Ascending aorta (tissue), 2 donors: ENCODE measurements at regions of chrX and their contacts with region 1.

Region 1: GRCh38 chrX:46376246-46376885 is 168.9 kb downstream of the ZNF674 start:
- DNase-seq: no peak
- H3K4me3 ChIP-seq: no peak overlapping the region
- H3K27ac ChIP-seq: peak overlapping the region in 1 of 2 donors; percentile 2
- H3K4me1 ChIP-seq: no peaks in the 10 kb centered on the region
- H3K27me3 ChIP-seq: no peaks in the 10 kb centered on the region
- CTCF ChIP-seq: peak; percentile 18 to 48 (median 19)

Region 2: GRCh38 chrX:45596188-45596808 is 780.1 kb before region 1 on chrX:
- intact Hi-C with region 1: loop called (anchors 10 kb)
- DNase-seq: no peak
- H3K4me3 ChIP-seq: no peak overlapping the region
- H3K27ac ChIP-seq: no peak overlapping the region
- H3K4me1 ChIP-seq: no peaks in the 10 kb centered on the region
- H3K27me3 ChIP-seq: no peaks in the 10 kb centered on the region
- CTCF ChIP-seq: peak in 1 of 3 experiments; percentile 33

Region 3: DNA sequence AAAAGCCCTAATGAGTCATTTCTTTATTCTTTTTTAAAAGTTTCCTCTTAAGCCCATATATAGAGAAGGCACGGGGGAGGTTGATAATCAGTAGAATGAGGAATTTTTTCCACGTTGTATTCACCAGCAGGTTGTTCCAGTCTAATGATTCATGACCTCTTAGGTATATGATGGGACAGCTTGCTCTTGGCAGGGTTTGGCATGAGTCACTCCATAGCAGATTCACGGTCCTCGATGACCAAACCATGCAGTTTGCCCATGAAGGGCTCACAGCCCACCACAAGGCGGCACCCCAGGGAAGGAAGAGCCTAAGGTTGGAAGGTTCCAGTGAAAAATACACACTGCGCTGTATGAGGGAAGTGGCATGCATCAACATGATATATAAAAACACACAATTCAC is 551.9 kb before region 1 on chrX:
- intact Hi-C with region 1: loop called (anchors 5 kb)
- DNase-seq: peak; percentile 39 to 85
- H3K4me3 ChIP-seq: no peak overlapping the region
- H3K27ac ChIP-seq: peak overlapping the region in 1 of 2 donors; percentile 14
- H3K4me1 ChIP-seq: no peaks in the 10 kb centered on the region
- H3K27me3 ChIP-seq: no peaks in the 10 kb centered on the region
- CTCF ChIP-seq: peak; percentile 24 to 48 (median 42)